ENCODE measurements at regions of chr10 and their contacts with region 1.

Region 1: DNA sequence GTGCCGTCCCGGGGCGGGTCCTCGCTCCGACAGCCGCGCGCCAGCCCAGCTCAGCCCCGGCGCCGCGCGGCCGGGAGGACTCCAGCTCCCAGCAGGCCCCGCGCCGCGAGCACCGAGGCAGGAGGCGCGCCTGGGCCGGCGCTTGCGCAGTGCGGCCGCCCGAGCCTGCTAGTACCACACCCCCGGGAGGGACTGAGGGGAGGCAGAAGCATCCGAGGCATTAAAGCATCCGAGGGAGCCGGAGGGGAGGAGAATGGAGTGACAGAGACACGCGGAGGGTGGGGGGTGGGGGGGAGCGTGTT is at the start of gene GRK5:
- DNase-seq: peak; percentile 92 to 96 (median 96)
- ATAC-seq: peak; percentile 93
- H3K4me3 ChIP-seq: peak within 1 kb of the TSS; percentile 61
- H3K4me1 ChIP-seq: peaks cover 18% of the 10 kb centered on the region
- CTCF ChIP-seq: no peak
- total RNA-seq, gene GRK5: 6.6 to 27.1 (median 8.3) TPM

Region 2: DNA sequence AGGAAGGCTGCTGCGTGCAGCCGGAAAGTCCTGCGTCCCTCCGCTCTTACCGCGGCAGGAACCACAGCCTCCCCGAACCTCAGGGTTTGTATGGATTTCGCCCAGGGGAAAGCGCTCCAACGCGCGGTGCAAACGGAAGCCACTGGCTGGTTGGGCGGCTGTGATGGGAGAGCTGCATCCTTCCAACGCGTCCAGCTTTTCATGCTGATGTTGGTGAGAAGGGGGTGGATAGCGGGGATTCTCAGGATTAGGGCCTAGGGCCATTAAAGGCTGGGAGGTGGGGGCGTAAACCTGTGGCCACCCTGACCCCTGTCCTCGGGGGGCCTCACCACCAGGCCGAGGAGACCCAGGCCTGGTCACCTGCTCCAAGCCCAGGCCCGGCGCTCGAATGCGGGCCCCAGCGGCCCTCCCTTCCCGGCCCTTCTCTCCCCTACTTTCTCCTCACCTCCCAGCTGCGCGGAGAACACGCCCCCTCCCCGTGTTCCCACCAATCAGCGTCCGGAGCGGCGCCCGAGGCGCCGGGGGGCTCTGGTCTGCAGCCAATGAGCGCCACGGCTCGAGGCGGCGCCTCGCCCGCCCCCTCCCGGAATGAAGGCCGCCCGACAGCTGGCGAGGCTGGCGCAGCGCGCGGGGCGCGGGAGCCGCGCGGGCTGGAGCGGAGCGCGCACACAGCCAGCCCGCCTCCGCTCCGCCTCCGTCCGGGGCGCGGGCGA is 178.3 kb before region 1 on chr10:
- intact Hi-C with region 1: no loop called
- DNase-seq: peak; percentile 87 to 93 (median 88)
- ATAC-seq: peak; percentile 84
- H3K4me3 ChIP-seq: peak overlapping the region; percentile 17
- H3K4me1 ChIP-seq: peaks cover 8% of the 10 kb centered on the region
- CTCF ChIP-seq: peak; percentile 24

Region 3: GRCh38 chr10:119161680-119162079 is 45.6 kb before region 1 on chr10:
- intact Hi-C with region 1: no loop called
- DNase-seq: no peak
- ATAC-seq: no peak
- H3K4me3 ChIP-seq: no peak overlapping the region
- H3K4me1 ChIP-seq: peaks cover 9% of the 10 kb centered on the region
- CTCF ChIP-seq: no peak

Region 4: GRCh38 chr10:119268871-119269506 is 61.7 kb after region 1 on chr10:
- intact Hi-C with region 1: loop called in 1 of 2 experiments (anchors 10 kb)
- DNase-seq: peak in 1 of 3 donors; percentile 57
- ATAC-seq: peak; percentile 29
- H3K4me3 ChIP-seq: no peak overlapping the region
- H3K4me1 ChIP-seq: peaks cover 28% of the 10 kb centered on the region
- CTCF ChIP-seq: no peak

Region 5: DNA sequence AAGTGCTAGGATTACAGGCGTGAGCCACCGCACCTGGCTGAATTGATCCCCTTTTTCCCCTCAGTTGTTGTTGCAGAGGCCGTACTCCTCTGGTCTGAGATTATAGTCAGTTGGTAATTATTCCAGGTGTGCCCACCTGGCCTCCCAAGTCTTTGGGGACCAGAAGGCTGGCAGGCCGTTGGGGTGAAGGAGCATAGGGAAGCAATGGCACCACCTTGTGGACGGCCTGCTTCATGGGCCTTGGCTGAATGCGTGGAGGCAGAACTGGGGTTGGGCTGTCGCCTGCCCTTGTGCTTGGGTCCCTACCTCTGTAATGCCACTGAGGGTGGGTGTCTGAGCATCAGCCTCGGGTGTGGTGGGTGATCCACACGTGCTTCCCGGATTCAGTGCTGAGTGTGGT is 209.5 kb after region 1 on chr10:
- intact Hi-C with region 1: loop called (anchors 5 to 10 kb)
- DNase-seq: peak; percentile 70 to 81 (median 75)
- ATAC-seq: peak; percentile 71
- H3K4me3 ChIP-seq: no peak overlapping the region
- H3K4me1 ChIP-seq: no peaks in the 10 kb centered on the region
- CTCF ChIP-seq: peak; percentile 24

Region 6: DNA sequence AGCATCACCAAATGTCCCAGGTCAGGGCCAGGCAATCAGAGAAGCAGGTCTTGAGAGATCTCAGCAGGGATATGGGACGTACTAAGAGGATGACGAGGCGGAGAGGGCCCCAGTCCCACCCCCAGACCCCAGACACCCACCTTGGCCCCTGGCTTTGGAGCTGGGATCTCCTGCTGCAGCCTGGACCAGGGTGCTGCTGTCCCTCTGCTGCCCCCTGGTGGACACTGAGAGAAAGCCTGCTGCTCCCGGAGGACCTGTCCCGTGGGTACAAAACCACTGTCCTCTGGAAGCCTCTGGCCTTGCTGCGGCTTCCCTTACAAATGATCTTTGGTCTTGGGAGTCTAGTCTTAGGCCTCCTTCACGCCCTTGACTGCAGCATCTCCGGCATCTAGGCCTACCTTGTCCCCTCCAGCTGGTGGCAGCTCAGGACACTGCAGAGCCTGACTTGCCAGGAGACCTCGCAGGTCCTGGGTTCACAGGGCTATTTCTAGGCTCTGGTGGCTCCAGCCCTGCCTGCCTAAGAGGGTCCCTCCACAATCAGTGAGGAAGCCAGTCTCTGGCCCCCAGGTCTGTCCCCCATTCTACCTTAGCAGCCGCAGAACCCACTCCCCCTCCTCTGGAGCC is 238.1 kb after region 1 on chr10:
- intact Hi-C with region 1: loop called in 1 of 2 experiments (anchors 10 kb)
- DNase-seq: peak; percentile 81 to 87 (median 83)
- ATAC-seq: peak; percentile 86
- H3K4me3 ChIP-seq: no peak overlapping the region
- H3K4me1 ChIP-seq: no peaks in the 10 kb centered on the region
- CTCF ChIP-seq: peak; percentile 91